ENCODE measurements at regions of chr11 and their contacts with region 1.

Region 1: GRCh38 chr11:47932544-47932943 is 47.8 kb upstream of the PTPRJ start:
- DNase-seq: no peak
- H3K4me3 Mint-ChIP-seq: no peak overlapping the region
- H3K27ac Mint-ChIP-seq: no peak overlapping the region
- H3K4me1 Mint-ChIP-seq: peaks cover 16% of the 10 kb centered on the region
- H3K27me3 Mint-ChIP-seq: no peaks in the 10 kb centered on the region

Region 2: GRCh38 chr11:47843361-47844055 is 89.0 kb before region 1 on chr11:
- CTCF ChIA-PET with region 1: no interaction called
- POLR2A ChIA-PET with region 1: no interaction called
- intact Hi-C with region 1: no loop called
- DNase-seq: no peak
- H3K4me3 Mint-ChIP-seq: no peak overlapping the region
- H3K27ac Mint-ChIP-seq: no peak overlapping the region
- H3K4me1 Mint-ChIP-seq: peaks cover 23% of the 10 kb centered on the region
- H3K27me3 Mint-ChIP-seq: no peaks in the 10 kb centered on the region

Region 3: DNA sequence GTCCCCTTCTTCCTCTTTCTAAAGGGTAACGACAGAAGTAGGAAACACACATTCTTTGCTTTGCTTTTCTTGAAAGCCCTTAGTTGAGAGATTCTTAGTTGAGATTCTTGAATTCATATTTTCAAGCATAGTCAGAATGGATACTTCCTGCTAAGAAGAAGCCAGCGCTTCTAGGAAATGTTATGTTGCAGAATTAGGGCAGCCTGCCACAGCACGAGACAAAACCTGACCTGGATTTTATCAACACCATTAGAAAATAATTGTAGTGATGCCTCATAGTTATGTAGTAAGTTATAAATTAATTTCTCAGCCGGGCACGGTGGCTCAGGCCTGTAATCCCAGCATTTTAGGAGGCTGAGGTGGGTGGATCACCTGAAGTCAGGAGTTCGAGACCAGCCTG is 46.4 kb before region 1 on chr11:
- CTCF ChIA-PET with region 1: interaction called, 3 read pairs
- POLR2A ChIA-PET with region 1: no interaction called
- intact Hi-C with region 1: loop called (anchors 5 kb)
- DNase-seq: peak; percentile 43
- H3K4me3 Mint-ChIP-seq: no peak overlapping the region
- H3K27ac Mint-ChIP-seq: peak overlapping the region; percentile 83
- H3K4me1 Mint-ChIP-seq: peaks cover 53% of the 10 kb centered on the region
- H3K27me3 Mint-ChIP-seq: no peaks in the 10 kb centered on the region

Region 4: DNA sequence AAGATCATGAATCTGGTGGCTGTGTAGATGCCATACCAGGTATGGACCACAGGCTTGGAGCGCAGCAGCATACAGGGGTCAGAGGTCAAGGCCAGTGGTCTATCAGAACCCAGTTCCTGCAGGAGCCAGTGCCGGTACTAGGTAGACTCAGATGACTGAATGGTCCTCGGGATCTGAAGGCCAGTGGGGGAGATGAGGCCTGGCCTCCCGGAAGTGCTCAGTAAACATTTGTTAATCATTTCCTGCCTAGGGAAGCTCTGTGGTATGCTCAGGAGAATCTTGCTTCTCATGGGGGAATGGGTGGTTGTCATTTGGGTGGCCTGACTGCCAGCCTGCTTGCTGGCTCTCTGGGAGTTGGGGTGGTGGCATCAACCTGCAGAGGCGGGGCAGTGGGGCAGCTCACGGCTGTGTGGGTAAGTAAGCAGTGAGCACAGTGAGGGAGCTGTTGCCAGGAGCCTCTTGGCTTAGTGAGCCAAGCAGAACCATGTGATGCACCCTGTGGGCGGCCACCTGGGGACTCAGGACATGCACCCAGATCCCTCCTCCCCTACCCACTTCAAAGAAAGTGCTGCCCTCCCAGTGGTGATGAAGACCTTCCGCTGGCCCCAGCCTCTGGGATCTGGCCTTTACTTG is 80.8 kb after region 1 on chr11:
- CTCF ChIA-PET with region 1: interaction called, 38 read pairs
- POLR2A ChIA-PET with region 1: no interaction called
- intact Hi-C with region 1: no loop called
- DNase-seq: peak; percentile 86
- H3K4me3 Mint-ChIP-seq: peak overlapping the region; percentile 63
- H3K27ac Mint-ChIP-seq: peak overlapping the region; percentile 96
- H3K4me1 Mint-ChIP-seq: peaks cover 88% of the 10 kb centered on the region
- H3K27me3 Mint-ChIP-seq: no peaks in the 10 kb centered on the region

Region 5: GRCh38 chr11:48055292-48056132 is 123.0 kb after region 1 on chr11:
- CTCF ChIA-PET with region 1: interaction called, 14 read pairs
- POLR2A ChIA-PET with region 1: no interaction called
- intact Hi-C with region 1: loop called (anchors 1 kb)
- DNase-seq: peak; percentile 88
- H3K4me3 Mint-ChIP-seq: peak overlapping the region; percentile 65
- H3K27ac Mint-ChIP-seq: peak overlapping the region; percentile 91
- H3K4me1 Mint-ChIP-seq: peaks cover 80% of the 10 kb centered on the region
- H3K27me3 Mint-ChIP-seq: no peaks in the 10 kb centered on the region

Region 6: GRCh38 chr11:48172818-48173609 is 240.5 kb after region 1 on chr11:
- CTCF ChIA-PET with region 1: interaction called, 4 read pairs
- POLR2A ChIA-PET with region 1: no interaction called
- intact Hi-C with region 1: loop called (anchors 5 kb)
- DNase-seq: peak; percentile 78
- H3K4me3 Mint-ChIP-seq: no peak overlapping the region
- H3K27ac Mint-ChIP-seq: no peak overlapping the region
- H3K4me1 Mint-ChIP-seq: peaks cover 23% of the 10 kb centered on the region
- H3K27me3 Mint-ChIP-seq: no peaks in the 10 kb centered on the region

Measured in activated CD4-positive, alpha-beta memory T cell treated with anti-CD3 and anti-CD28 coated beads for 36 hours (primary cell).